Activated CD4-positive, alpha-beta memory T cell treated with anti-CD3 and anti-CD28 coated beads for 36 hours (primary cell): ENCODE measurements at regions of chr5 and their contacts with region 1.

Region 1: DNA sequence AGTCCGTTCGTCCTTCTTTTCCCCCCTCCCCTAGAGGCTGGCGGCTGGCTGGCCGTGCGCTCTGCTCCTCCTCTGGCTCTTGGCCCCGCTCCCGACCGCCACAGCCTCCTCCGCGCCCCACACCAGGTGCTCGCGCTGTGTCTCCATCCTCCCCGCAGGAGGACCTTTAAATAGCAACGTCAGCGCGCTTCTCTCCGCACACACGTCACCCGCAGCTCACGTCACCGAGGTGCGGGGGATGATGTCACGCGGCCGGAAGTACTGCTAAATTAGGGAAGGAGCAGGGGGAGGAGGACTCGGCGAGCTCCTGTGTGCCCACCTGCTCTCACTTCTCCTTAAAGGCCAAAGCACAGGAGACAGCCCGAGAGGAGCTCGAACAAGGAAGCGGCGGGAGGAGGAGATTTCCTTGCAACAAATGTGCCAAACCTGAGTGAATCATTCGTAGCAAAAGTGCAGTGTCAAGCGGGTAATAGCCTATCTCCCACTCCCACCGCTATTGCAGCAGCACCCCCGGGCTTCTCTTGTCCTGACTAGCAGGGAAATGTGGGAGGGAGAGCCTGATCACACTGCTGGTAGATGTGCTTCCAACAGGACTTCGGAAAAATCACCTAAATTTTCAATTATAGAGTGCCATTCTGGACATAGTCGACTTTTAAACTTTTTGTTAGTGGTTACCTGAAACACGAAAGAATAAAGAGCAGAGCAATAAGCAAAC is 614 bp upstream of the HOMER1 start:
- DNase-seq: peak; percentile 93
- H3K4me3 Mint-ChIP-seq: peak overlapping the region; percentile 92
- H3K27ac Mint-ChIP-seq: peak overlapping the region; percentile 91
- H3K4me1 Mint-ChIP-seq: peaks cover 28% of the 10 kb centered on the region
- H3K27me3 Mint-ChIP-seq: peaks cover 24% of the 10 kb centered on the region

Region 2: GRCh38 chr5:79235634-79236363 is 278.7 kb before region 1 on chr5 and contains the start of gene JMY:
- CTCF ChIA-PET with region 1: no interaction called
- POLR2A ChIA-PET with region 1: interaction called, 4 read pairs
- intact Hi-C with region 1: loop called (anchors 5 kb)
- DNase-seq: peak; percentile 91
- H3K4me3 Mint-ChIP-seq: peak within 1 kb of the TSS; percentile 94
- H3K27ac Mint-ChIP-seq: peak within 1 kb of the TSS; percentile 98
- H3K4me1 Mint-ChIP-seq: peaks cover 15% of the 10 kb centered on the region
- H3K27me3 Mint-ChIP-seq: no peaks in the 10 kb centered on the region
- total RNA-seq, gene JMY: 8.6 to 9.1 TPM

Region 3: GRCh38 chr5:79612667-79613198 is 98.2 kb after region 1 on chr5:
- CTCF ChIA-PET with region 1: interaction called, 3 read pairs
- POLR2A ChIA-PET with region 1: interaction called, 3 read pairs
- intact Hi-C with region 1: loop called (anchors 2 kb)
- DNase-seq: no peak
- H3K4me3 Mint-ChIP-seq: peak overlapping the region; percentile 98
- H3K27ac Mint-ChIP-seq: peak overlapping the region; percentile 95
- H3K4me1 Mint-ChIP-seq: peaks cover 31% of the 10 kb centered on the region
- H3K27me3 Mint-ChIP-seq: no peaks in the 10 kb centered on the region

Region 4: DNA sequence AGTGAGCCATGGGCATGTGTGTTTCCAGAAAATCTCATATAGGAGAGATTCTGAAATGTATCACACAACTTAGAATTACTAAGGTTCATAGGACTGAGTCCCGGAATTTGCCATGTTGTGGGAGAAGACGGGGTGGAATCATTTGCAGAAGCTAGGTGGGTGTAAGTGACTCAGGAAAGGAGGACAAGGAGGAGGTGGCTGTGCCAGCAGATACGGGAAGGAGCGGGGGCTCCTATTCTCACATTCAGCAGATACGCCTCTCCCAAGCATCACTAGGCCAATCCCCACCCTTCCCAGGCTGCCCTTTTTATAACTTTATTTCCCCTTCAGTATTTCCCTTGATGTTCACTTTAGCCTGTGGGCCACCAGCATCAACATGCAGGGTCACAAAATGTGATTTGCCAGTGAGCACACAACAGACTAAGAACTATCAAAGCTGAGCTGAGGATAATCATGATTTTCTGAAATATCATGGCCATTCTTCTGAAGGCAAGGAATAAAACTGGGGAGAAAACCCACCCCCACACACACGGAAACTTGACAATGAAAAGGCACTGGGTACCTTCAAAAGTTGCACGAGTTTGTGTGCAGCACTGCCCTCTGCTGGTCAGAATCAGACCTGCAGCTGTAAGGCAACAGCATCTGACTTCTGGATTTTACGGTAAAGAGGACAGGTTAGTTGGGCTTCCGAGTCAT is 343.3 kb after region 1 on chr5:
- CTCF ChIA-PET with region 1: no interaction called
- POLR2A ChIA-PET with region 1: no interaction called
- intact Hi-C with region 1: loop called (anchors 5 kb)
- DNase-seq: peak; percentile 87
- H3K4me3 Mint-ChIP-seq: no peak overlapping the region
- H3K27ac Mint-ChIP-seq: no peak overlapping the region
- H3K4me1 Mint-ChIP-seq: peaks cover 3% of the 10 kb centered on the region
- H3K27me3 Mint-ChIP-seq: peaks cover 3% of the 10 kb centered on the region

Region 5: GRCh38 chr5:80034962-80035821 is 520.6 kb after region 1 on chr5 and contains the start of gene THBS4:
- CTCF ChIA-PET with region 1: no interaction called
- POLR2A ChIA-PET with region 1: no interaction called
- intact Hi-C with region 1: loop called (anchors 5 kb)
- DNase-seq: no peak
- H3K4me3 Mint-ChIP-seq: peak within 1 kb of the TSS; percentile 38
- H3K27ac Mint-ChIP-seq: no peak within 1 kb of the TSS
- H3K4me1 Mint-ChIP-seq: peaks cover 37% of the 10 kb centered on the region
- H3K27me3 Mint-ChIP-seq: peaks cover 45% of the 10 kb centered on the region
- total RNA-seq, gene THBS4: 1.8 to 2.2 TPM